Activated CD4-positive, alpha-beta memory T cell treated with anti-CD3 and anti-CD28 coated beads, Interleukin-2, amount 10 ng/mL, durations not matched to agents 7 days and 5 days (primary cell): ENCODE measurements at regions of chr18 and their contacts with region 1.

Region 1: GRCh38 chr18:51197661-51198424 is at the start of gene MEX3C:
- DNase-seq: peak; percentile 99
- H3K4me3 Mint-ChIP-seq: peak within 1 kb of the TSS; percentile 89
- H3K27ac Mint-ChIP-seq: peak within 1 kb of the TSS; percentile 97
- H3K4me1 Mint-ChIP-seq: peaks cover 26% of the 10 kb centered on the region
- H3K27me3 Mint-ChIP-seq: no peaks in the 10 kb centered on the region
- total RNA-seq, gene MEX3C: 55.4 to 62.6 TPM

Region 2: DNA sequence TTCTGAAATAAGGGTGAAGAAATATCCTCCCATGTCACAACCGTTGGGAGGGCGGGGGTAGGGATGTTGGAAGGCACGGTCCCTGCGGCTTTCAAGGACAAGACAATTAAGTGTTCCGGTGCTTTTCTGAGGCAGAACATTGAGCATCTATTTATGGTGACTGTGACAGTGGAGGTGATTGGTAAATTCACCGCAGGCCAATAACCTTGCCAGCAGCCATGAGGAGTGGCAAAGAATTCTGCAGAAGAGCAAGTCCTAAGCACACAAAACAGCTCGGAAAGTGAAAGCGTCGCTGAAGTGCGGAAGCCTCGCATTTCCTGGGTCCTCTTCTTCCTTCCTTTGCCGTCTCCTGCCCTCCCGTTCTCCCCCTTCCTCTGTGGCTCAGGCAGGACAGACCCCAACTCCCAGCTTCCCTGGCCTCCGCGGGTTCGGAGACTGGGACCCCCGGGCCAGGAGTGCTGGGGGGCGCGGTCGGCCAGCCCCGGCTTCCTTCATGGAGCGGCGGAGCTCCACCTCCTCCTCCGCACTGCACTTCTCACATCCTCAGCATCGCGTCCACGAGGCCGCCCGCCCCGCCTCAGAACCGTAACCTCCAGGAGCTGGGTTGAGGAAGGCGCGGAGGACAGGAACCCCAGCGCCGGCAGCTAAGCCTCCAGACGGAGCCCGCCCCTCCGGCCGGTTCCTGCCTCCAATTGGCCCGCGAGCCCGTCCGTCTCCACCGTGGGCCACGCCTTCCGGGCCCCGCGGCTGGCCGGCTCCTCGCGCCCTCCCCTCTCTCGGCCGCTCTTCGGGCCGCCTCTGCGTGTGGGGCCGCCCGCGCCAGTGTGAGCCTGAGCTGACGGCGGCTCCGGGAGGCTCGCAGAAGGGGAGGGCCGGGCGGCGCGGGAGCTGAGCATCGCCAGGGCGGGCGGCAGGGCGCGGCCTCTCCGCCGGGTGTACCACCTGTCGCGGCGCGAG is 319.2 kb before region 1 on chr18 and contains the start of gene ME2:
- CTCF ChIA-PET with region 1: no interaction called
- POLR2A ChIA-PET with region 1: interaction called, 34 read pairs
- DNase-seq: peak; percentile 93
- H3K4me3 Mint-ChIP-seq: peak within 1 kb of the TSS; percentile 95
- H3K27ac Mint-ChIP-seq: peak within 1 kb of the TSS; percentile 98
- H3K4me1 Mint-ChIP-seq: peaks cover 30% of the 10 kb centered on the region
- H3K27me3 Mint-ChIP-seq: peaks cover under 1% of the 10 kb centered on the region
- total RNA-seq, gene ME2: 71.8 to 73.6 TPM

Region 3: DNA sequence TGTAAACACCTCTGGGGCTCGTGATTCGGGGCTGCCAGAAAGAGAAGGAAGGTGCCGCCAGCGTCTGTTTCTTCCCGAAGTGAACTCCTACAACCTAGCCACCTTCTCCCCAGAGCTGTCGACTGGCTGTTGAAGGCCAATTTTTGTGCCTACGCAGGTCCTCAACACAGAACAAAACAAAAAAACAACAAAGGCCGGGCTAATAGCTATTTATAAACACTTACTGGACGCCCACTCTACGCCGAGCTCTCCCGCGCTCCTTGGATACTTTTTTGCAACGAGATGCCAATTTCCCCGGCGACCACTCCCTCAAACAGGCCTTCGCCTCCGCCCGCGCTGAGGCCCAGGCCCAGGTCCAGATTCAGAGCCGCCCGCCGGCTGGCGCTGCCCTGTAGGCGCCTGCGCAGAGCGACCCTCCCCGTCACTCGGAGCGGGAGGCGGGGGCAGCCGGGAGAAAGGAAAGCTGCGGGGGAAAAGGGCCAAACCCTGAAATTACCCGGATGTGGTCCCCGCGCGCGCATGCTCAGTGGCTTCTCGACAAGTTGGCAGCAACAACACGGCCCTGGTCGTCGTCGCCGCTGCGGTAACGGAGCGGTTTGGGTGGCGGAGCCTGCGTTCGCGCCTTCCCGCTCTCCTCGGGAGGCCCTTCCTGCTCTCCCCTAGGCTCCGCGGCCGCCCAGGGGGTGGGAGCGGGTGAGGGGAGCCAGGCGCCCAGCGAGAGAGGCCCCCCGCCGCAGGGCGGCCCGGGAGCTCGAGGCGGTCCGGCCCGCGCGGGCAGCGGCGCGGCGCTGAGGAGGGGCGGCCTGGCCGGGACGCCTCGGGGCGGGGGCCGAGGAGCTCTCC is 167.9 kb before region 1 on chr18 and contains the start of gene SMAD4:
- CTCF ChIA-PET with region 1: no interaction called
- POLR2A ChIA-PET with region 1: interaction called, 33 read pairs
- DNase-seq: peak; percentile 97
- H3K4me3 Mint-ChIP-seq: peak within 1 kb of the TSS; percentile 98
- H3K27ac Mint-ChIP-seq: peak within 1 kb of the TSS; percentile 90
- H3K4me1 Mint-ChIP-seq: peaks cover 66% of the 10 kb centered on the region
- H3K27me3 Mint-ChIP-seq: no peaks in the 10 kb centered on the region
- total RNA-seq, gene SMAD4: 80.3 to 83.8 TPM

Region 4: GRCh38 chr18:51153659-51154371 is 44.0 kb before region 1 on chr18:
- CTCF ChIA-PET with region 1: interaction called, 6 read pairs
- POLR2A ChIA-PET with region 1: interaction called, 87 read pairs
- DNase-seq: peak; percentile 51
- H3K4me3 Mint-ChIP-seq: peak overlapping the region; percentile 67
- H3K27ac Mint-ChIP-seq: peak overlapping the region; percentile 92
- H3K4me1 Mint-ChIP-seq: peaks cover 45% of the 10 kb centered on the region
- H3K27me3 Mint-ChIP-seq: no peaks in the 10 kb centered on the region

Region 5: DNA sequence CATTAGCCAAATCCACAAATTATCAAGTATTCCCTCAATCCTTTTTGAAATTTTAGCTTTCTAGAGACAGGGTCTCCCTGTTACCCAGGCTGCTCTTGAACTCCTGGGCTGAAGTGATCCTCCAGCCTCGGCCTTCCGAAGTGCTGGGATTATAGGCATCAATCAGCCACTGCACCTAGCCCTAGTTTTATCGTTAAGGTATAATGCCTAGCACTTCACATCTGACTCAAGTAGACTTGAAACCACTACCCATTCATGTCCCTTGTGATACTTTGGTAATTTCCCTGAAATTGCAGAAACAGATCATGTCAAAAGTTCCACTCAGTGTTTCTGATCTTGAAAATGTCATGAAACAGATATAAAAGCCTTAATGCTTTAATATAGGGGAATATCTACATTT is 26.6 kb before region 1 on chr18:
- CTCF ChIA-PET with region 1: interaction called, 5 read pairs
- POLR2A ChIA-PET with region 1: interaction called, 70 read pairs
- DNase-seq: no peak
- H3K4me3 Mint-ChIP-seq: no peak overlapping the region
- H3K27ac Mint-ChIP-seq: peak overlapping the region; percentile 82
- H3K4me1 Mint-ChIP-seq: peaks cover 60% of the 10 kb centered on the region
- H3K27me3 Mint-ChIP-seq: no peaks in the 10 kb centered on the region

Region 6: DNA sequence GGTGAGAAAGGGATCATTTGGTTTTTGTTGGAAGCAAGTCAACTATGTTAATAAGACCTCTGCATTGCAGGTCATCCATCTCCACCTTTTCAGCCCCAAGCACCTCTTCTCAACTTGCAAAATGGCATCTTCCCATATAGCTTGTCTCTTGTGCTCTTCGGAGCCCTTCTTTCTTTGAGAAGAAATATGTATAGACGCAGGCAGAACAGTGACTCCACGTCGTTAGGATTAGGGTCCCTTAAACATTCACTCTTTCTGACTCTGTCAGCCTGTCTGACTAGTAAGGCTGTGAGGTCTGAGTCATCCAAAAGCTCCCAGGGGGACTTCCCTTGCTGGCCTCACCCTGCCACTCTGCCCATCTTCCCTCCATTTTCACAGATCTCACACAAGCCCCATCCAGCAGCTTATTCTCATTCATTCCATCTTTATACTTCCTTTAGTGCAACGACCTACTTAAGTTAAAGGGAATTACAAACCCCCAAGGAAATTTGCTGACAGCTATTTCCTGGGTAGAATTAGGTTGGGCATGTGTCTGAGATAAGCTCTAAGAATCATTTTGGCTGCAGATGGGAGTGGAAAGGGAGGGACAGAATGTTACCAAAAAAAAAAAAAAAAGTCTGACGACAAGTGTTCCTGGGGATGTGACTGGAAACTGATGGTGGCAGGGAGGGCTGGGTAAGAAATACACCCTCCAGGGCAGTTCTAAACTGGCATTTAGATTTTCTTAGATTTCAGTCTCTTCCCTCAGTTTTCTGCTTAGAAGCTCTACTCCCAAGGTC is 37.4 kb after region 1 on chr18:
- CTCF ChIA-PET with region 1: interaction called, 3 read pairs
- POLR2A ChIA-PET with region 1: interaction called, 19 read pairs
- DNase-seq: peak; percentile 35
- H3K4me3 Mint-ChIP-seq: no peak overlapping the region
- H3K27ac Mint-ChIP-seq: peak overlapping the region; percentile 24
- H3K4me1 Mint-ChIP-seq: peaks cover 29% of the 10 kb centered on the region
- H3K27me3 Mint-ChIP-seq: no peaks in the 10 kb centered on the region

Region 7: GRCh38 chr18:51251625-51252024 is 53.8 kb after region 1 on chr18:
- CTCF ChIA-PET with region 1: no interaction called
- POLR2A ChIA-PET with region 1: no interaction called
- DNase-seq: no peak
- H3K4me3 Mint-ChIP-seq: no peak overlapping the region
- H3K27ac Mint-ChIP-seq: no peak overlapping the region
- H3K4me1 Mint-ChIP-seq: no peaks in the 10 kb centered on the region
- H3K27me3 Mint-ChIP-seq: peaks cover 5% of the 10 kb centered on the region